Sigmoid colon (tissue), 7 donors: ENCODE measurements at regions of chr17 and their contacts with region 1.

Region 1: DNA sequence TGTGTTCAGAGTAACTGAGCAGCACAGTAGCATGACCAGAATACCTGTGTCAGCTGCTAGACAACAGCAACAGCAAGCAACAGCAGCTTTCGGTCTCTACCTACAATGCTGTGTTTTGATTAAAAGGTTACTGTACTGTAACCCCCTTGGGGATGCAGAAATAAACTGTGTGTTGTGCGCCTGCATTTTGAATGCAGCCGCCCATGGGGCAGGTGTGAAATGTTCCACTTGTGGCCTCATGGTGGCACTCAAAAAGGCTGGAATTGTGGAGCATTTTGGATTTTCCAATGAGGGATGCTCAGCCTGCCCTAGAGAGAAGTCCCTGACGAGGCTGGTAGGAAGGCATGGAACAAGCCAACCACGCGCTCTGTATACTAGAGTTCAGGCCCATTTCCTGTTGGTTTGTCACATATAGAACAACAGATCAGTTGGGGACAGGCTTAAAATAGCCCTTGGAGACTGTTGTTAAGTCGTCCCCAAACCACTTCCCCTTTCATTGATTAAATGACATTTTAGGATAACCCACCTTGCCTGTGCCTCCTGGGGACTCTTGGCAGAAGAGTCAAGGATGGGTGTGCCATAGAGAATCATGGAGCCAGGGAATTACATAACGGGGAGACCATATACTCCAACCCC is 27.1 kb downstream of the SCPEP1 start:
- DNase-seq: no peak
- H3K4me3 ChIP-seq: no peak overlapping the region
- H3K27ac ChIP-seq: no peak overlapping the region
- H3K4me1 ChIP-seq: peaks cover 0 to 5% (median 3%) of the 10 kb centered on the region in 4 donors
- H3K27me3 ChIP-seq: no peaks in the 10 kb centered on the region
- CTCF ChIP-seq: peak in 3 of 4 experiments; percentile 28 to 43 (median 37)
- EP300 ChIP-seq: no peak
- POLR2A ChIP-seq: no peak

Region 2: GRCh38 chr17:57051886-57052361 is 46.9 kb after region 1 on chr17:
- intact Hi-C with region 1: loop called (anchors 2 kb)
- DNase-seq: peak; percentile 68
- H3K4me3 ChIP-seq: no peak overlapping the region
- H3K27ac ChIP-seq: peak overlapping the region in 3 of 4 donors; percentile 25 to 59 (median 34)
- H3K4me1 ChIP-seq: peaks cover 0 to 24% (median 14%) of the 10 kb centered on the region in 4 donors
- H3K27me3 ChIP-seq: no peaks in the 10 kb centered on the region
- CTCF ChIP-seq: no peak
- EP300 ChIP-seq: no peak
- POLR2A ChIP-seq: no peak

Region 3: GRCh38 chr17:57071991-57072944 is 67.2 kb after region 1 on chr17:
- intact Hi-C with region 1: loop called (anchors 5 kb)
- DNase-seq: no peak
- H3K4me3 ChIP-seq: no peak overlapping the region
- H3K27ac ChIP-seq: peak overlapping the region in 3 of 4 donors; percentile 29 to 71 (median 70)
- H3K4me1 ChIP-seq: peaks cover 0 to 35% (median 19%) of the 10 kb centered on the region in 4 donors
- H3K27me3 ChIP-seq: no peaks in the 10 kb centered on the region
- CTCF ChIP-seq: no peak
- EP300 ChIP-seq: peak in 2 of 4 donors; percentile 39 to 41
- POLR2A ChIP-seq: no peak

Region 4: DNA sequence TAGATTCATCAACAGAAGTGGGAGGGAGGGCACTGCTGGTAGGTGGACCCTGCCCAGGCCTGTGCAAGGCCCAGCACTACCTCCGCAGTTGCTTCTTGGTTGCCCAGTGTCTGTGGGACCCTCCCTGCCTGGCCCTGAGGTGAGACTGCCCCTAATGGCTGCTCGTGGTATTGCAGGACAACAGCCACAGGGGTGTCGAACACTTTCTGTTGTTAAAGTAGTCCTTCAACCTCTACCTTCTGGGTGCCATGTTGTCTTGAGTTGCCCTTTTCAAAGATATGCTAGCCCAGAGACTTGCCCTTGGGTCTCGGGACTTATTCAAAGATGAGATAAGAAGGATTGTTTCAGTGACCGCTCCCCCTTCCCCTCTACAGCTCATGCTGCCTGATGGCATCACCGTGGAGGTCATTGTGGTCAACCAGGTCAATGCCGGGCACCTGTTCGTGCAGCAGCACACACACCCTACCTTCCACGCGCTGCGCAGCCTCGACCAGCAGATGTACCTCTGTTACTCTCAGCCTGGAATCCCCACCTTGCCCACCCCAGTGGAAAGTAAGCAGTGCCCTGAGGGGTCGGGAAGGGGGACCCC is 109.1 kb after region 1 on chr17:
- intact Hi-C with region 1: loop called (anchors 5 kb)
- DNase-seq: no peak
- H3K4me3 ChIP-seq: no peak overlapping the region
- H3K27ac ChIP-seq: peak overlapping the region in 3 of 4 donors; percentile 45 to 63 (median 46)
- H3K4me1 ChIP-seq: peaks cover 0 to 40% (median 31%) of the 10 kb centered on the region in 4 donors
- H3K27me3 ChIP-seq: no peaks in the 10 kb centered on the region
- CTCF ChIP-seq: peak; percentile 45 to 88 (median 77)
- EP300 ChIP-seq: no peak
- POLR2A ChIP-seq: no peak

Region 5: DNA sequence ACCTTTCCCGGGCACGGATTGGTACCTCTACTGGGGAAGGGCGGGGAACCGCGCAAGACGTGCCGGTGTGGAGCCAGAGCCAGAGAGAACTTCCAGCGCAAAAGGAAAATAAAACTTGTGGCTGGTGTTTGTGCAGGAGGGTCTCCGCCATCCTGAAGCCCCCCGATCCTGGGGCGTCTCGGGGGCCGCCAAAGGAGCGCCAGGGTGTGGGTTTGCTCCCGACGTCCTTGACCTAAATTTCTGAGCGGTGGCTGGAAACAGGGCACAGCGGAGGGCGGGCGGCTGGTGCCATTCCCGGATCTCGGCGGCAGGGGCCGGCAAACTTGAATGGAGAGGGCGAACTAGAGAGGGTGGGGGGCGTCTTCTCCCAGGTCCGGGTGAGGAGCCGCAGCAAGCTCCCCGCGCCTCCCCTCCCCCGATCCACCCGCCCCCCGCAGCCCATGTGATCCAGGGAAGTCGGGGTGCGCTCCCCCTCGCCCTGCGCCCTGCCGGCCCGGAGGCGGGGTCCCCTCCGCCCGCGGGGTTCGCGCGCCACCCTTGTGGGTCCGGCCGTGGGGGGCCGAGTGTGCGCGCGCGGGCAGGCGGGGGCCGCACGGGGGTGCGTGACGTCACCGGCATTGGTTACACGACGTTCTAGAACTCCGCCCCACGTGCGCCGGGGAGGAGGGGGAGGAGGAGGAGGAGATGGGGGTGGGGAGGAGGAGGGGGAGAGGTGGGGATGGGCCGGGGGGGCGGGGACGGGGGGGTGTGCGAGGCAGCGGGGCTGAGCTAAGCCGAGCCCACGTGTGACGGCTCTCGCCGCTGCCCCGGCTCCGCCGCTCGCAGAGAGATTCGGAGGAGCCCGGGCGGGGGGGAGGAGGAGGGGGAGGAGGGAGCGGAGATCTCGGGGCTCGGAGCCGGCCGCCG is 251.0 kb after region 1 on chr17 and contains the start of gene MSI2:
- intact Hi-C with region 1: no loop called
- DNase-seq: peak; percentile 99
- H3K4me3 ChIP-seq: peak within 1 kb of the TSS; percentile 90 to 98 (median 94)
- H3K27ac ChIP-seq: peak within 1 kb of the TSS; percentile 95 to 99 (median 97)
- H3K4me1 ChIP-seq: peaks cover 0 to 34% (median 19%) of the 10 kb centered on the region in 4 donors
- H3K27me3 ChIP-seq: no peaks in the 10 kb centered on the region
- CTCF ChIP-seq: no peak
- EP300 ChIP-seq: peak; percentile 31 to 86 (median 82)
- POLR2A ChIP-seq: peak in 1 of 2 donors; percentile 22
- total RNA-seq, gene MSI2: 19.5 to 25.8 (median 20.8) TPM